Kidney (tissue), 22 donors: ENCODE measurements at regions of chr21 and their contacts with region 1.

Region 1: DNA sequence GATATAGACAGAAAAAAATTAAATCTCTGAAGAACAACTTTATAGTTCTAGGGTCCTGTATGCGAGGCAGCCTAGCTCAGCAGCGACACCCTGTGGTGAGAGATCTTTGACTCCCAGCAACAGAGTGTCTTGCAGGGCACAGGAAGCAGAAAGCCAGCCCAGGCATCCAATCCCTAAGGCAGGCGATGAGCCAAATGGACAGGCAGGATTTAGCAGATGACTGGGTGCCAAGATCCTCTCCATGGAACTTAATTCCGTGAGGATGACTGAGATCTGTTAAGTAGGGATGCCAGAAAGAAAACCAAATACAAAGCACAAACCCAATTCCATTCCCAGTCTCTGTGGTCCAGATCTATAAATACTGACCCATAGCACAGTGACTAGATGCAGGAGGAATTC is 38.8 kb downstream of the HLCS start:
- DNase-seq: peak; percentile 85 to 89 (median 88)
- H3K4me3 ChIP-seq: no peak overlapping the region
- H3K27ac ChIP-seq: no peak overlapping the region
- H3K4me1 ChIP-seq: peaks cover 0 to 2% (median 0%) of the 10 kb centered on the region in 3 donors
- H3K27me3 ChIP-seq: no peaks in the 10 kb centered on the region
- CTCF ChIP-seq: peak; percentile 86

Region 2: GRCh38 chr21:36504067-36505058 is 423.4 kb before region 1 on chr21:
- intact Hi-C with region 1: loop called (anchors 5 kb)
- DNase-seq: peak in 3 of 5 donors; percentile 26 to 69 (median 68)
- H3K4me3 ChIP-seq: no peak overlapping the region
- H3K27ac ChIP-seq: no peak overlapping the region
- H3K4me1 ChIP-seq: peaks cover 0 to 2% (median 0%) of the 10 kb centered on the region in 3 donors
- H3K27me3 ChIP-seq: no peaks in the 10 kb centered on the region
- CTCF ChIP-seq: peak; percentile 92